ENCODE measurements at regions of chr1 and their contacts with region 1.

Region 1: GRCh38 chr1:243939167-243939848 is 89.3 kb upstream of the AKT3 start:
- DNase-seq: no peak
- ATAC-seq: no peak
- H3K4me3 ChIP-seq: no peak overlapping the region
- H3K4me3 Mint-ChIP-seq: no peak overlapping the region
- H3K27ac ChIP-seq: no peak overlapping the region
- H3K27ac Mint-ChIP-seq: no peak overlapping the region
- H3K4me1 ChIP-seq: no peaks in the 10 kb centered on the region
- H3K4me1 Mint-ChIP-seq: no peaks in the 10 kb centered on the region
- H3K27me3 ChIP-seq: peaks cover 0 to 9% of the 10 kb centered on the region in 2 experiments
- H3K27me3 Mint-ChIP-seq: peaks cover 5 to 14% of the 10 kb centered on the region in 2 donors

Region 2: DNA sequence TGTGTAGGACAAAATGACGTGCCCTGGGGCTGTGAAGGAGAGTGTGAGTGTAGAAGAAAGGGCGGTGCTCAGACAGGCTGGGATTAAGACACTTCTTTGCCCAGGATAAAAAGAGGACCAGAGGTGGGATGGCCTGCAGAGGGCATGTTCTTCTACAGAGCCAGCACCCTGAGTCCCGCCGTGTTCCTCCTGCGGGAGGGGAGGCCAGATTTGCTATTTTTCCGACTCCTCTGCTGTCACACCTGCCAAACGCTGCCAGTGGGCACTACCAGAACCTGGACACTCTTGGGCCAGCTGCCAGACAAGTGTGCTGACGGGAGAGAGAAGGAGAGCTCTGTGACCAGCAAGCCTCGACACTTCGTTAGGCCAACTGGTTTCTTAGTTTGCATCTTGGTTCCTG is 1621.2 kb before region 1 on chr1:
- CTCF ChIA-PET with region 1: no interaction called
- POLR2A ChIA-PET with region 1: no interaction called
- DNase-seq: no peak
- ATAC-seq: no peak
- H3K4me3 ChIP-seq: no peak overlapping the region
- H3K4me3 Mint-ChIP-seq: no peak overlapping the region
- H3K27ac ChIP-seq: no peak overlapping the region
- H3K27ac Mint-ChIP-seq: no peak overlapping the region
- H3K4me1 ChIP-seq: no peaks in the 10 kb centered on the region
- H3K4me1 Mint-ChIP-seq: no peaks in the 10 kb centered on the region
- H3K27me3 ChIP-seq: peaks cover 0 to 3% of the 10 kb centered on the region in 2 experiments
- H3K27me3 Mint-ChIP-seq: no peaks in the 10 kb centered on the region

Region 3: DNA sequence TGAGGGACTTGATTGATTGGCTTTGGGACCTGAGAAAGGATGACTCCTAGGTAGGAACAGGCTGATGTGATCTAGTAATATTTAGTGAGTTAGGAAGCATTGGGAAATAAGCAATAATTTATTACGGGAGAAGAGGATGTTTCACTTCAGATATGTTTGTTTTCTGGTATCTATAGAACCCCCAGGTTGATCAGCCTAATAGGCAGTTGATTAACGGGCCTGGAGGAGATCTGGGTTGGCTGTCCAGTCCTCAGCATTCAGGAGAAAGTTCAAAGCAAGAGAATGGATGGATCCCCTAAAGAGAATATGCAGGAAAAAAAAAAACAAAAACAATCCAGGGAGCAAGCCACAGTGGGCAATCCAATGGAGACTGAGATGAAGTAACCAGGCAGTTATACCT is 41.0 kb before region 1 on chr1:
- CTCF ChIA-PET with region 1: no interaction called
- POLR2A ChIA-PET with region 1: no interaction called
- DNase-seq: no peak
- ATAC-seq: no peak
- H3K4me3 ChIP-seq: no peak overlapping the region
- H3K4me3 Mint-ChIP-seq: no peak overlapping the region
- H3K27ac ChIP-seq: no peak overlapping the region
- H3K27ac Mint-ChIP-seq: no peak overlapping the region
- H3K4me1 ChIP-seq: no peaks in the 10 kb centered on the region
- H3K4me1 Mint-ChIP-seq: no peaks in the 10 kb centered on the region
- H3K27me3 ChIP-seq: peaks cover 0 to 6% of the 10 kb centered on the region in 2 experiments
- H3K27me3 Mint-ChIP-seq: peaks cover 9 to 12% of the 10 kb centered on the region in 2 donors

Region 4: GRCh38 chr1:244102468-244102867 is 163.2 kb after region 1 on chr1:
- CTCF ChIA-PET with region 1: interaction called in 1 of 2 experiments, 10 read pairs
- POLR2A ChIA-PET with region 1: no interaction called
- DNase-seq: no peak
- ATAC-seq: no peak
- H3K4me3 ChIP-seq: no peak overlapping the region
- H3K4me3 Mint-ChIP-seq: no peak overlapping the region
- H3K27ac ChIP-seq: no peak overlapping the region
- H3K27ac Mint-ChIP-seq: no peak overlapping the region
- H3K4me1 ChIP-seq: peaks cover 8 to 15% of the 10 kb centered on the region in 2 experiments
- H3K4me1 Mint-ChIP-seq: peaks cover 13 to 18% (median 14%) of the 10 kb centered on the region in 3 donors
- H3K27me3 ChIP-seq: peaks cover 0 to 29% of the 10 kb centered on the region in 2 experiments
- H3K27me3 Mint-ChIP-seq: peaks cover 15 to 34% of the 10 kb centered on the region in 2 donors

Measured in T-cell (primary cell).